ENCODE measurements at regions of chr2 and their contacts with region 1.

Region 1: GRCh38 chr2:86020984-86021383 is 84.7 kb downstream of the POLR1A start:
- DNase-seq: no peak
- H3K4me3 ChIP-seq: no peak overlapping the region
- H3K27me3 ChIP-seq: no peaks in the 10 kb centered on the region; the same call in 1 of the 2 replicates
- CTCF ChIP-seq: no peak

Region 2: DNA sequence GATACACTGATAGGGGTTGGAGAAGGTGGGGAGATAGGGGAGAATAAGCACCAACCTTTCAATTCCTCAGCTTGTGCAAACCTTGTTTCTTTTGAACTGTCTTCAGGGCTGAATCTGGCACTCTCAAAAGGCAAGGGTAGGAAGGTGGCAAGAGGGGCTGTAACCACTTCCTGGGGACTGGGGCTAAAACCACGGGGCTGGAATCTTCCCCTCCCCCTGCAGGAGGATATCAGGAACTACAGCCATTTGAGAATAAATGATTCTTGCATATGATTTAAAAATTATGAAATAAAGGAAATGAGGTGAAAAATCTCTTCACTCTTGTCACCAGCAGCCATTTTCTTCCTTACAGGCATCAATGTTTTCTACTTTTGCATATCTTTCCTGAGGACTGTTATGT is 216.4 kb before region 1 on chr2:
- CTCF ChIA-PET with region 1: no interaction called
- POLR2A ChIA-PET with region 1: no interaction called
- DNase-seq: no peak
- H3K4me3 ChIP-seq: no peak overlapping the region
- H3K27me3 ChIP-seq: no peaks in the 10 kb centered on the region
- CTCF ChIP-seq: peak; percentile 69

Region 3: GRCh38 chr2:85999061-85999831 is 21.7 kb before region 1 on chr2:
- CTCF ChIA-PET with region 1: interaction called, 10 read pairs
- POLR2A ChIA-PET with region 1: no interaction called
- DNase-seq: no peak
- H3K4me3 ChIP-seq: no peak overlapping the region
- H3K27me3 ChIP-seq: no peaks in the 10 kb centered on the region
- CTCF ChIP-seq: no peak

Region 4: GRCh38 chr2:86035883-86036668 is 15.1 kb after region 1 on chr2:
- CTCF ChIA-PET with region 1: interaction called, 14 read pairs
- POLR2A ChIA-PET with region 1: no interaction called
- DNase-seq: peak; percentile 53
- H3K4me3 ChIP-seq: no peak overlapping the region
- H3K27me3 ChIP-seq: no peaks in the 10 kb centered on the region
- CTCF ChIP-seq: peak; percentile 53

Region 5: GRCh38 chr2:86105252-86105968 is 84.4 kb after region 1 on chr2 and contains the start of gene POLR1A:
- CTCF ChIA-PET with region 1: no interaction called
- POLR2A ChIA-PET with region 1: interaction called, 10 read pairs
- DNase-seq: peak; percentile 83
- H3K4me3 ChIP-seq: peak within 1 kb of the TSS; percentile 70
- H3K27me3 ChIP-seq: no peaks in the 10 kb centered on the region
- CTCF ChIP-seq: no peak
- polyA plus RNA-seq, gene POLR1A: 8.0 and 9.0 TPM in 2 replicates

Region 6: DNA sequence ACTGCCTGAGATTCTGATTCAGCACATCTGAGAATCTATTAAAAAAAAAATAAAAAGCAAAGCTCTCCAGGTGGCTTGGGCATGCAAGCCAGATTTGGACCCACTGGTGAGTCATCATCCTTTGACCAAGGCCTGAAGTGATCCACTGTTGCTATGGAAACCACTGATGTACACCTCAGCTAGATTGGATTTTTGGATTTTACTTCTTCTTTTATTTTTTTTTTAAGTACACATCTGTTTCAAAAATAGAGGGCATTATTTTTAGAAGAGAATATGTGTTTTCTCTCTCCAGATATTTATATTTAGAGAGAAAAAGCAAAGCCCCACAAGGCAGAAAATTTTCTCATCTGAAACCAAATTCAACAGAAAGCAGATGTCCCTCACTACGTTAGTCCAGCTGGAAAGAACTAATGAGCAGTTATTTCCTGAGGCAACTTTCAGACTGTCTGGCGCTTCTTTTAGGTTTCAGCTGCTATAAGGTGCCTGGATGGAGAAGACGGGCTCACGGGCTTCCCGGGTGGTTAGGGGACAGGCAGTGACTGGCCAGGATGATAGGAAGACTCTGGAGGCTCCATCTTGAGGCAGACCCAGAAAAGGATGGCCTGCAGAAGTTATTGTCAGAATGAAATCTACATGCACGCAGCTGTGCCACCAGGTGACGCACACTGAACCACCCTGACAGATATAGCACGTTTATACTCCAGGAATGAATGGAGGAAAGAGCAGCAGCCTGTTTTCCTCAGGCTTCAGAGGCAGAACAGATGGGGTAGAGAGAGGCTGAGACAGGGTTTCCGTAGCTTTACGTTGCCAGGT is 228.8 kb after region 1 on chr2:
- CTCF ChIA-PET with region 1: no interaction called
- POLR2A ChIA-PET with region 1: no interaction called
- DNase-seq: peak; percentile 52
- H3K4me3 ChIP-seq: no peak overlapping the region
- H3K27me3 ChIP-seq: no peaks in the 10 kb centered on the region
- CTCF ChIP-seq: 0 out of 2 replicates have a peak, but pooled peaks have one; percentile 11

Measured in BJ (cell line).